ENCODE measurements at regions of chr19 and their contacts with region 1.

Region 1: GRCh38 chr19:788983-789700 is 8.1 kb upstream of the PTBP1 start:
- DNase-seq: peak in 1 of 2 experiments; percentile 74
- H3K4me3 ChIP-seq: no peak overlapping the region
- H3K27ac ChIP-seq: peak overlapping the region; percentile 42; the same call in 1 of the 2 replicates
- H3K4me1 ChIP-seq: peaks cover 0 to 36% (median 16%) of the 10 kb centered on the region in 4 experiments; a peak in 6 of 7 replicates
- H3K27me3 ChIP-seq: no peaks in the 10 kb centered on the region
- CTCF ChIP-seq: peak in 2 of 3 experiments; percentile 11 to 14; a peak in 2 of 4 replicates
- EP300 ChIP-seq: no peak
- POLR2A ChIP-seq: no peak
- RAD21 ChIP-seq: peak in 1 of 2 experiments; percentile 14; a peak in 1 of 4 replicates

Region 2: GRCh38 chr19:703651-704446 is 85.3 kb before region 1 on chr19:
- CTCF ChIA-PET with region 1: no interaction called
- POLR2A ChIA-PET with region 1: no interaction called
- DNase-seq: peak; percentile 90 to 100
- H3K4me3 ChIP-seq: peak overlapping the region; percentile 1 to 59 (median 32); a peak in 7 of 8 replicates
- H3K27ac ChIP-seq: no peak overlapping the region
- H3K4me1 ChIP-seq: peaks cover 0 to 8% (median 3%) of the 10 kb centered on the region in 4 experiments; a peak in 6 of 7 replicates
- H3K27me3 ChIP-seq: no peaks in the 10 kb centered on the region
- CTCF ChIP-seq: no peak; a peak in 1 of 4 replicates
- EP300 ChIP-seq: no peak
- POLR2A ChIP-seq: peak in 1 of 2 experiments; percentile 47; a peak in 2 of 3 replicates
- RAD21 ChIP-seq: no peak

Region 3: DNA sequence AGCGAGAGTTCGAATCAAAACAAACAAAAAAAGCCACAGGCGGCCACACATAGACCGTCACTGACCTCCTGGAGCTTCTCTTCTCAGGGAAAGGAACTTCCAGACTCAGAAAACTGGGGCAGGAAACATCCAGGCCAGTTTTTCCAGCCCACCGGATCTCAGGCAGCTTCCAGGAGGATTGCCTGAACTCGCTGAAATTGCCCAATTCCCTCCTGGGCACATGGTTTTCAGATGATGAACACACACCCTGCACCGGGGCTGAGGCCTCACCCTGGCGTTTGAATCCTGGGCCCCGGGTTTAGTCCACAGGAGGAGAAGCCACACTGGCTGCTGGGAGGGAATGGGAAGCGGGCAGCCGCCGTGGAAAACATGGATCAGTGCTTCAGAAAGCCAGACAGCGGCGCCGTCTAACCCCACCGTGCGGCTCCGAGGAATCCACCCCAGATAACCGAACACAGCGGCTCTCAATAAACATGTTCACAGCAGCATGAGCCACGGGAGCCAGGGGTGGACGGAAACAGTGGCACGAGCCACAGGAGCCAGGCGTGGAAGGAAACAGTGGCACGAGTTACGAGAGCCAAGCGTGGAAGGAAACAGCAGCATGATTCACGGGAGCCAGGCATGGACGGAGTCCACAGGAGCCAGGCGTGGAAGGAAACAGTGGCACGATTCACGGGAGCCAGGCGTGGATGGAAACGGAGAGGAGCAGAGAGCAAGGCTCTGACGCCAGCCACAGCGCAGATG is 10.1 kb before region 1 on chr19:
- CTCF ChIA-PET with region 1: interaction called, 10 read pairs
- POLR2A ChIA-PET with region 1: interaction called, 53 read pairs
- DNase-seq: no peak
- H3K4me3 ChIP-seq: no peak overlapping the region
- H3K27ac ChIP-seq: no peak overlapping the region
- H3K4me1 ChIP-seq: peaks cover 7 to 15% (median 11%) of the 10 kb centered on the region in 4 experiments
- H3K27me3 ChIP-seq: no peaks in the 10 kb centered on the region
- CTCF ChIP-seq: no peak
- EP300 ChIP-seq: no peak
- POLR2A ChIP-seq: no peak
- RAD21 ChIP-seq: no peak